ENCODE measurements at regions of chr19 and their contacts with region 1.

Region 1: GRCh38 chr19:49555600-49556411 is 24.6 kb downstream of the NOSIP start:
- DNase-seq: peak; percentile 66 to 89 (median 74)
- H3K4me3 ChIP-seq: peak overlapping the region; percentile 37
- H3K4me3 Mint-ChIP-seq: peak overlapping the region in 6 of 7 donors; percentile 54 to 84 (median 71)
- H3K27ac ChIP-seq: no peak overlapping the region
- H3K27ac Mint-ChIP-seq: peak overlapping the region in 6 of 8 donors; percentile 79 to 99 (median 88)
- H3K4me1 ChIP-seq: peaks cover 88% of the 10 kb centered on the region
- H3K4me1 Mint-ChIP-seq: peaks cover 69 to 75% (median 71%) of the 10 kb centered on the region in 3 donors
- H3K27me3 ChIP-seq: no peaks in the 10 kb centered on the region
- H3K27me3 Mint-ChIP-seq: peaks cover 0 to 4% of the 10 kb centered on the region in 2 donors

Region 2: GRCh38 chr19:49533551-49534488 is 22.0 kb before region 1 on chr19:
- CTCF ChIA-PET with region 1: interaction called, 3 read pairs
- POLR2A ChIA-PET with region 1: interaction called, 13 read pairs
- DNase-seq: peak; percentile 83 to 88 (median 84)
- H3K4me3 ChIP-seq: peak overlapping the region; percentile 64
- H3K4me3 Mint-ChIP-seq: peak overlapping the region; percentile 78 to 94 (median 87)
- H3K27ac ChIP-seq: no peak overlapping the region
- H3K27ac Mint-ChIP-seq: peak overlapping the region; percentile 59 to 91 (median 88)
- H3K4me1 ChIP-seq: peaks cover 22% of the 10 kb centered on the region
- H3K4me1 Mint-ChIP-seq: peaks cover 18 to 26% (median 20%) of the 10 kb centered on the region in 3 donors
- H3K27me3 ChIP-seq: no peaks in the 10 kb centered on the region
- H3K27me3 Mint-ChIP-seq: peaks cover 0 to 4% of the 10 kb centered on the region in 2 donors

Region 3: GRCh38 chr19:49580264-49581006 is 24.6 kb after region 1 on chr19 and contains the start of gene NOSIP:
- CTCF ChIA-PET with region 1: no interaction called
- POLR2A ChIA-PET with region 1: no interaction called
- DNase-seq: peak; percentile 92 to 97 (median 93)
- H3K4me3 ChIP-seq: peak within 1 kb of the TSS; percentile 93
- H3K4me3 Mint-ChIP-seq: peak within 1 kb of the TSS; percentile 90 to 95 (median 94)
- H3K27ac ChIP-seq: peak within 1 kb of the TSS; percentile 78
- H3K27ac Mint-ChIP-seq: peak within 1 kb of the TSS; percentile 65 to 98 (median 92)
- H3K4me1 ChIP-seq: peaks cover 24% of the 10 kb centered on the region
- H3K4me1 Mint-ChIP-seq: peaks cover 27 to 39% (median 35%) of the 10 kb centered on the region in 3 donors
- H3K27me3 ChIP-seq: no peaks in the 10 kb centered on the region
- H3K27me3 Mint-ChIP-seq: no peaks in the 10 kb centered on the region
- total RNA-seq, gene NOSIP: 62.5 to 64.3 TPM

Measured in CD8-positive, alpha-beta memory T cell (primary cell).